Sciatic nerve (tissue), 2 donors: ENCODE measurements at regions of chr14 and their contacts with region 1.

Region 1: DNA sequence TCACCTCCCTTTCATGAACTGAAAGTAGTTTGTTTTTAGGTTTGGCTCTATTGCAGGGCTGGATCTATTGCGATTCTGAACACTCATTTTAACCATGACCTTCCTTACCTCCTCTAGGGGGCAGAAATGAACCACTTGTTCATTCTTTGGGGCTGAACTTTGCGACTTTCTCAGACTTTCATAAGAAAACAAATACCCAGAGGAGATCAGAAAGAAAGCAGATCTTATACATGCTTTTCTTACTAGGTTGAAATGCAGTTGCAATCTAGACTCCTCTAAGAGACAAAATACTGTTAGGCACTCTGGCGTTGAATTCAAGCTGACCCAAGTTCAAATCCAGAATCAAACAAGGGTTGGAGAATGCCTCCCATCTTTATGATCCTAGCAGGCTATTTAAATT is 32.6 kb upstream of the PLEKHG3 start:
- DNase-seq: no peak
- ATAC-seq: peak; percentile 88

Region 2: GRCh38 chr14:64764641-64765520 is 93.3 kb after region 1 on chr14:
- intact Hi-C with region 1: loop called (anchors 2 kb)
- DNase-seq: peak; percentile 87
- ATAC-seq: peak; percentile 78

Region 3: GRCh38 chr14:64937821-64938193 is 266.2 kb after region 1 on chr14:
- intact Hi-C with region 1: no loop called
- DNase-seq: no peak
- ATAC-seq: no peak